ENCODE measurements at regions of chr20 and their contacts with region 1.

Region 1: GRCh38 chr20:40945754-40946450 is 82.7 kb upstream of the TOP1 start:
- DNase-seq: no peak
- ATAC-seq: no peak
- H3K4me3 ChIP-seq: no peak overlapping the region
- H3K27ac ChIP-seq: no peak overlapping the region
- H3K4me1 ChIP-seq: no peaks in the 10 kb centered on the region
- H3K27me3 ChIP-seq: no peaks in the 10 kb centered on the region
- CTCF ChIP-seq: peak in 2 of 5 experiments; percentile 23 to 40
- POLR2A ChIP-seq: no peak

Region 2: GRCh38 chr20:40738976-40739375 is 206.9 kb before region 1 on chr20:
- in situ Hi-C with region 1: loop called in 1 of 4 experiments (anchors 5 kb)
- intact Hi-C with region 1: no loop called
- DNase-seq: no peak
- ATAC-seq: no peak
- H3K4me3 ChIP-seq: no peak overlapping the region
- H3K27ac ChIP-seq: no peak overlapping the region
- H3K4me1 ChIP-seq: no peaks in the 10 kb centered on the region
- H3K27me3 ChIP-seq: no peaks in the 10 kb centered on the region
- CTCF ChIP-seq: no peak
- POLR2A ChIP-seq: no peak

Measured in gastrocnemius medialis (tissue), 4 donors.